Gastrocnemius medialis (tissue), 4 donors: ENCODE measurements at regions of chr2 and their contacts with region 1.

Region 1: DNA sequence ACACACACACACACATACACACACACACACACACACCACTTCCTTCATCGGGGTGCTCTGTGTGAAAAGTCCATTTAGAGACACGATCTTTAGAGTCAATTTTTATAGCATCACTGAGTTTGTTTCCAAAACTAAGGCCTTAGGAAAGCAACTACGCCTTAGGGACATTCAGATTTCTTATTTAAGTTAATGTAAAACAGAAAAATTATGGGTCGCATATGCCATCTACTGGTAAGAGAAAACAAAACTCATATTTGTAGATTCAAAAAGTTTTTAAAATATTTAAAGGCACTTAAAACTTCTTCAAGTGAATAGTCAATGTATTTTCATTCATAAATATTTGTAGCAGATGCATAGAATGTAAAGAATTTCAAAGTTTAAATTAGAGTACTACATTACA is 166.2 kb downstream of the ATAD2B start:
- DNase-seq: no peak
- ATAC-seq: peak in 1 of 2 donors; percentile 24
- H3K4me3 ChIP-seq: no peak overlapping the region
- H3K27ac ChIP-seq: peak overlapping the region in 2 of 4 donors; percentile 6 to 34
- H3K4me1 ChIP-seq: peaks cover 22 to 42% of the 10 kb centered on the region in 2 donors
- H3K27me3 ChIP-seq: no peaks in the 10 kb centered on the region
- CTCF ChIP-seq: peak in 4 of 5 experiments; percentile 27 to 46 (median 42)
- POLR2A ChIP-seq: no peak

Region 2: GRCh38 chr2:22904126-22904684 is 856.5 kb before region 1 on chr2:
- in situ Hi-C with region 1: no loop called
- intact Hi-C with region 1: loop called (anchors 5 kb)
- DNase-seq: no peak
- ATAC-seq: no peak
- H3K4me3 ChIP-seq: no peak overlapping the region
- H3K27ac ChIP-seq: no peak overlapping the region
- H3K4me1 ChIP-seq: no peaks in the 10 kb centered on the region
- H3K27me3 ChIP-seq: no peaks in the 10 kb centered on the region
- CTCF ChIP-seq: peak in 2 of 5 experiments; percentile 13 to 25
- POLR2A ChIP-seq: no peak

Region 3: GRCh38 chr2:23366720-23367119 is 394.0 kb before region 1 on chr2:
- in situ Hi-C with region 1: no loop called
- intact Hi-C with region 1: loop called (anchors 5 kb)
- DNase-seq: no peak
- ATAC-seq: peak; percentile 33 to 41
- H3K4me3 ChIP-seq: no peak overlapping the region
- H3K27ac ChIP-seq: no peak overlapping the region
- H3K4me1 ChIP-seq: no peaks in the 10 kb centered on the region
- H3K27me3 ChIP-seq: no peaks in the 10 kb centered on the region
- CTCF ChIP-seq: peak in 1 of 5 experiments; percentile 16
- POLR2A ChIP-seq: no peak

Region 4: GRCh38 chr2:23384551-23385349 is 376.0 kb before region 1 on chr2 and contains the start of gene KLHL29:
- in situ Hi-C with region 1: loop called in 1 of 4 experiments (anchors 25 kb)
- intact Hi-C with region 1: loop called (anchors 5 kb)
- DNase-seq: peak; percentile 80 to 83
- ATAC-seq: peak; percentile 73 to 82
- H3K4me3 ChIP-seq: peak within 1 kb of the TSS; percentile 67 to 77 (median 74)
- H3K27ac ChIP-seq: peak within 1 kb of the TSS; percentile 62 to 73 (median 70)
- H3K4me1 ChIP-seq: peaks cover 7 to 22% of the 10 kb centered on the region in 2 donors
- H3K27me3 ChIP-seq: peaks cover 5 to 29% (median 14%) of the 10 kb centered on the region in 3 donors
- CTCF ChIP-seq: no peak
- POLR2A ChIP-seq: peak; percentile 72 to 73
- total RNA-seq, gene KLHL29: 4.3 to 24.9 (median 8.7) TPM

Region 5: GRCh38 chr2:23636426-23636825 is 124.3 kb before region 1 on chr2:
- in situ Hi-C with region 1: no loop called
- intact Hi-C with region 1: loop called (anchors 2 kb)
- DNase-seq: peak in 1 of 2 donors; percentile 60
- ATAC-seq: peak; percentile 23 to 70
- H3K4me3 ChIP-seq: no peak overlapping the region
- H3K27ac ChIP-seq: peak overlapping the region; percentile 22 to 51 (median 32)
- H3K4me1 ChIP-seq: peaks cover 0 to 12% of the 10 kb centered on the region in 2 donors
- H3K27me3 ChIP-seq: no peaks in the 10 kb centered on the region
- CTCF ChIP-seq: peak; percentile 22 to 54 (median 35)
- POLR2A ChIP-seq: no peak

Region 6: GRCh38 chr2:23745726-23746105 is 15.0 kb before region 1 on chr2:
- in situ Hi-C with region 1: no loop called
- intact Hi-C with region 1: loop called (anchors 1 kb)
- DNase-seq: peak; percentile 84 to 90
- ATAC-seq: peak; percentile 97 to 98
- H3K4me3 ChIP-seq: peak overlapping the region in 2 of 4 donors; percentile 26 to 41
- H3K27ac ChIP-seq: peak overlapping the region; percentile 88 to 94 (median 90)
- H3K4me1 ChIP-seq: peaks cover 22 to 25% of the 10 kb centered on the region in 2 donors
- H3K27me3 ChIP-seq: no peaks in the 10 kb centered on the region
- CTCF ChIP-seq: no peak
- POLR2A ChIP-seq: no peak

Region 7: DNA sequence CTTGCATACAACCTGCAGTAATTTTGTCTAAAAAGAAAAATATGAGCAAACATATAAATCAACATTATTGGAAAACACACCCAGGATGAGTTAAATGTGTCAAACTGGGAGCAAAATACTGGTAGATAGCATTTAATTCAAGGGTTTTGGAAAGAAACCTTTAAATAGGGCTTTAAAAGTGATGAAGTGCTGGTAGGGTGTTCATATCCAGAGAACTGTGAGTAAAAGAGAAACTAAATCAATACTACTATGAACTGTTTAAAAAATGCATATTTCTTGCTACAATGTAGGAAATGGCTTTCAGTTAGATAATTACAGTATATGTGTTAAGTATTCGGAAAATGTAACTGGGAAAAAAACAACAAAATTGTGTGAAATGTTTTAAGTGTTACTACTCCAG is 48.4 kb after region 1 on chr2:
- in situ Hi-C with region 1: no loop called
- intact Hi-C with region 1: no loop called
- DNase-seq: no peak
- ATAC-seq: no peak
- H3K4me3 ChIP-seq: no peak overlapping the region
- H3K27ac ChIP-seq: no peak overlapping the region
- H3K4me1 ChIP-seq: no peaks in the 10 kb centered on the region
- H3K27me3 ChIP-seq: no peaks in the 10 kb centered on the region
- CTCF ChIP-seq: no peak
- POLR2A ChIP-seq: no peak